Ascending aorta (tissue), 2 donors: ENCODE measurements at regions of chr16 and their contacts with region 1.

Region 1: DNA sequence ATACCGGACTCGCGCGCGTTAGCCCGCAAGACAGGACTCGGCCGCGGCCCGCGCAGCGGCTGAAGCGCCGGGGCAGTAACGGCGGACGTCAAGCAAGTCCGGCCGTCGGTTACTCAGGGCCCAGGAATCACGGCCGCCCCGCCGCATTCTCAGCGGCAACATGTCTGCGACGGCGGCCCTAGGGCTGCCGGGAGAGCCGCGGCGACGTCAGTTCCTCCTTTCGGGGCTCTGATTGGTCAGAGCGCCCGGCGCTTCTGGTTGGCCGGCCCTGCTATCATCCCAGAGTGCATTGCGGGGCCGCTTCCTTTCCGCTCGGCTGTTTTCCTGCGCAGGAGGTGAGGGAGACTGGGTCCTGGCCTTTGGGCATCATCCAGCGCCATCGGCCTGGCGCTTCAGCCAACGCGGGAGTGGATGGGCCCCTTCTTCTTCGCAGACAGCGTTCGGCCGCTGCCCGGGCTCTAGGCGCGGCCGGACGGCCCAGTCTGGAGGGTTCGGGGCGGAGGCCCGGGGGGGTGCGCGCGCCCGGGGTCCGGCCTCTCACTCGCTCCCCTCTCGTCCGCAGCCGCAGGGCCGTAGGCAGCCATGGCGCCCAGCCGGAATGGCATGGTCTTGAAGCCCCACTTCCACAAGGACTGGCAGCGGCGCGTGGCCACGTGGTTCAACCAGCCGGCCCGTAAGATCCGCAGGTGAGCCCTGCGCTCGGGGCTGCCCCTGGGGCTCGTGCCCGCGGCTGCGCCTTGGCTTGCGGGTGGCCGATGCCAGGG is at the start of gene RPL13:
- DNase-seq: peak; percentile 82 to 98
- H3K4me3 ChIP-seq: peak within 1 kb of the TSS; percentile 66 to 74
- H3K27ac ChIP-seq: peak within 1 kb of the TSS; percentile 95 to 96
- H3K4me1 ChIP-seq: peaks cover 17% of the 10 kb centered on the region in 2 donors
- H3K27me3 ChIP-seq: no peaks in the 10 kb centered on the region
- CTCF ChIP-seq: no peak
- total RNA-seq, gene RPL13: 8,360 TPM

Region 2: GRCh38 chr16:89507834-89508590 is 52.5 kb before region 1 on chr16 and contains the start of gene SPG7:
- intact Hi-C with region 1: loop called (anchors 5 kb)
- DNase-seq: peak; percentile 19 to 87
- H3K4me3 ChIP-seq: peak within 1 kb of the TSS; percentile 66 to 97
- H3K27ac ChIP-seq: peak within 1 kb of the TSS; percentile 94 to 96
- H3K4me1 ChIP-seq: peaks cover 8 to 24% of the 10 kb centered on the region in 2 donors
- H3K27me3 ChIP-seq: no peaks in the 10 kb centered on the region
- CTCF ChIP-seq: no peak
- total RNA-seq, gene SPG7: 108 TPM